Activated B cell treated with CpG ODN at 0.5 μM for 24 hours (primary cell): ENCODE measurements at regions of chr9 and their contacts with region 1.

Region 1: GRCh38 chr9:125558453-125559092 is 148.4 kb downstream of the MAPKAP1 start:
- DNase-seq: no peak
- ATAC-seq: peak; percentile 83
- H3K4me3 Mint-ChIP-seq: no peak overlapping the region
- H3K27ac Mint-ChIP-seq: no peak overlapping the region
- H3K4me1 Mint-ChIP-seq: peaks cover 26% of the 10 kb centered on the region
- H3K27me3 Mint-ChIP-seq: no peaks in the 10 kb centered on the region
- CTCF ChIP-seq: no peak

Region 2: GRCh38 chr9:125200210-125201047 is 358.1 kb before region 1 on chr9 and contains the start of gene RABEPK:
- CTCF ChIA-PET with region 1: no interaction called
- POLR2A ChIA-PET with region 1: no interaction called
- intact Hi-C with region 1: no loop called
- DNase-seq: peak; percentile 95
- ATAC-seq: peak; percentile 98
- H3K4me3 Mint-ChIP-seq: peak within 1 kb of the TSS; percentile 94
- H3K27ac Mint-ChIP-seq: peak within 1 kb of the TSS; percentile 92
- H3K4me1 Mint-ChIP-seq: peaks cover 13% of the 10 kb centered on the region
- H3K27me3 Mint-ChIP-seq: no peaks in the 10 kb centered on the region
- CTCF ChIP-seq: no peak
- total RNA-seq, gene RABEPK: 19.1 and 19.4 TPM in 2 replicates

Region 3: DNA sequence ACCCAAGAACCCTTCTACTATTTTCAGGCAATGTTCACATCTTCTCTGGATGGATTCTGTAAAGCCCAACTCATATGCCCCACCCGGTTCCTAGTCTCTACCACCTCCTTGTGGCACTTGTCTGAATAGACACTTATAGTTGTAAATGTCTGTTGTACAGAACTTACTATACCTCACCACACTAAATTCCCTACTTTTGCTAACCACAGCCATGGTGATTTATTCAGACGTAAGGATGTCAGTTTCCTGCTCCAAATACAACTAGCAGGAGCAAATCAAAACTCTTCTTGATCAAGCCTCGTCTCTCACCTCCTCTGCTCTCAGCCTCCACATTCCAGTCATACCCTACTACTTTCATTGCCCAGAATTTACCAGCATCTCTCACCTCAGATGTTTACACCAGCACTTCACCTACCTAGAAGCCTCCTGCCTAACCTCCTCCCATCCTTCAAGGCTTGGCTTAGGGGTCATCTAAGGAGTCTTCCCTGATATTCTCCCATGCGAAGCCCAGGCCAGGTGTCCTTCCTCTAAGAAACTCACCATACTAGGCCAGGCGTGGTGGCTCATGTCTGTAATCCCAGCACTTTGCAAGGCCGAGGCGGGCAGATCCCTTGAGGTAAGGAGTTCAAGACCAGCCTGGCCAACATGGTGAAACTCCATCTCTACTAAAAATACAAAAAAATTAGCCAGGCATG is 73.0 kb after region 1 on chr9:
- CTCF ChIA-PET with region 1: interaction called, 4 read pairs
- POLR2A ChIA-PET with region 1: no interaction called
- intact Hi-C with region 1: loop called (anchors 2 kb)
- DNase-seq: no peak
- ATAC-seq: no peak
- H3K4me3 Mint-ChIP-seq: peak overlapping the region; percentile 59
- H3K27ac Mint-ChIP-seq: peak overlapping the region; percentile 90
- H3K4me1 Mint-ChIP-seq: peaks cover 84% of the 10 kb centered on the region
- H3K27me3 Mint-ChIP-seq: no peaks in the 10 kb centered on the region
- CTCF ChIP-seq: no peak

Region 4: DNA sequence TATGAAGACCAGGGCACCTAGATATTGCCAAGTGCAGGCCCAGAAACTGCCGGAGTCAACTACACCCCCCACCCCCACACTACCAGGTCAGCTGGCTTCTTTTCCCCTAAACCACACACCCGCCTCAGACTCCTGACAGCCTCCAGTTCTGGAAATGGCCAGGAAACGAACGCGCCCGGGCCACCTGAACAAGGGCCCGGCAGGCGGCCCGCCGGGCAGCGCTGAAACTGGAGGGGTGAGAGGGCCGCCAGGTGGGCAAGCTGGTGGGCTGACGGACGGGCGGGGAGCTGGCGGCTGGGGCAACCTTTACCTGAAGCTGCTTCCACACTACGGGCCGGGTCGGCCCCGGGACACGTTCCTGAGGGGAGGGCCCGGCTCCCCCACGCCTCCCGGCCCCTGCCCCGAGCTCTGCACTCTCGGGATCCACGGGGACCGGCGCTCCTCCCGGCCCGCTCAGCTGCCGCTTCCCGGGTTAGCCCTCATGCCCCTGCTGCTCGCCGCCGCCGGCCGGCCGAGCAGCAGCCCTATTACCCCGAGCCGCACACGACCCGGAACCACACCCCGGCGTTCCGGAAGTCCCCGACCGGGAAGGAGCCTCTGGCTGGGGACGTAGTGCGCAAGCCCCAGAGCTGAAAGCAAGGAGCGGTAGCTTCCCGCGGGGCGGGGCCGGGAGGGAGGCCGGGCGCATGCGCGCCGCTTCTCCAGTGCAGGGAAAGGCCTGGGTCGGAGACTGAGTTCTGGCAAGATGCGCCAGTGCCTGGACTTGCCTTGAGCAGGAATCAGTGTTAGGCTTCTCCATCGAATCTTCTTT is 148.3 kb after region 1 on chr9 and contains the start of gene MAPKAP1:
- CTCF ChIA-PET with region 1: interaction called, 5 read pairs
- POLR2A ChIA-PET with region 1: interaction called, 3 read pairs
- intact Hi-C with region 1: loop called (anchors 2 kb)
- DNase-seq: peak; percentile 86
- ATAC-seq: peak; percentile 99
- H3K4me3 Mint-ChIP-seq: peak within 1 kb of the TSS; percentile 85
- H3K27ac Mint-ChIP-seq: peak within 1 kb of the TSS; percentile 85
- H3K4me1 Mint-ChIP-seq: peaks cover 44% of the 10 kb centered on the region
- H3K27me3 Mint-ChIP-seq: peaks cover 4% of the 10 kb centered on the region
- CTCF ChIP-seq: no peak
- total RNA-seq, gene MAPKAP1: 80.2 and 84.9 TPM in 2 replicates

Region 5: DNA sequence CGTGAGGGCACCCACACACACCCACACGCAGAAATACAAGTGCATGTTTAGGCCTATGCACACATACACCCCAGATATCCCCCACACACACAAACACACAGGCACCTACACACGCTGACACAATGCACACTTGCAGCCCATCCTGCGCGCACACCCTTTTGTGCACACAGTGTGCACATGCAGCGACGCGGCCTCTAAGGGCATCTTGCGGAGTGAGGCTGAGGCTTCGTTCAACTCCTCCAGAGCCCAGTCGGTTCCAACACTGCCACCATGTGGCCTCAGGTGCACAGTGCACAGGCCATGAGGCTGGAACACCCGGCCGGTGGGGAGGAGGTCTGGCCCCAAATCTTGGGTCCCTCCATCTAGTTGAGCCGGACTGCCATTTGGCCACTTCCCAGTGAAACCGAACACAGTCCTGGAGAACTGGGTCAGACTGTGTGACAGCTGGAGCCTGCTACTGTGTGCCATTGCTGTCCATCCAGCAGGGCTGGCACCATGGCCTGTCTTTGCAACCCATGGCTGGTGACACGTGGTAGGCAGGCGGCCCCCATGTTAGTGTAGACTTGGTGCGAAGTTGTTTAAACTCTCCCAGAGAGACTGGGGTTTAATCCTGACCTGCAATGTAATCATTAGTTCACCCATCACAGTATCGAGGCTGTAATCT is 670.3 kb after region 1 on chr9:
- CTCF ChIA-PET with region 1: interaction called, 3 read pairs
- POLR2A ChIA-PET with region 1: no interaction called
- intact Hi-C with region 1: loop called (anchors 1 kb)
- DNase-seq: peak; percentile 62
- ATAC-seq: peak; percentile 99
- H3K4me3 Mint-ChIP-seq: no peak overlapping the region
- H3K27ac Mint-ChIP-seq: no peak overlapping the region
- H3K4me1 Mint-ChIP-seq: peaks cover 1% of the 10 kb centered on the region
- H3K27me3 Mint-ChIP-seq: peaks cover 35% of the 10 kb centered on the region
- CTCF ChIP-seq: no peak

Region 6: DNA sequence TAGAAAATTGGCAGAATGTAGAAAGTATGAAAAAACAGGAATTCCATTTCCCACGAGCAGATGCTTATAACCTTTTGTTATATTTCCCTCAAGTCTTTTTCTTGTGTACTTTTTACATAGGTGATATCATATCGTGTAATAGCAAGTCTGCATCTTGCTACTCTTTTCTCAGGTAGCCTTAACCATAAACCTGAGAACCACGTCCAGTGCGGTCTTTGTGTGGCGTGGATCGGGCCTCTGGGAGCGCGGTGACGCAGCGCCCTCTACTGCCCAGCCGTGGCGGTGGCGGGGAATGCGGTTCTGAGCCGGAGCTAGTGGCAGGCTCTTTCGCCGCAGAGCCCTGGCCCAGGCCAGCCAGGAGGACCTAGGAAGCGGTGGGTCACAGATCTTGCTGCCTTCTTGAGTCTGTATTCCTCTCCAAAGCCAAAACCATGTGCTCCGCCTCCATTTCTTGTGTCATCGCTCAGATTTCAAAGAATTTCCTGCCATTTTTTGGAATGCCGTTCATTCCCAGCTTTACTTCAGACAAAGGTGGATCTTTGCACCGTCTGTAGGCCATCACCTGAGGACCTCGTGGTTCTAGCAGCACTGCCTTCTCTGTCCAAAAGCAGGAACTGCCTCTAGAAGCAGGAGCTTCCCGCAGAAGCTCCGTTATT is 840.0 kb after region 1 on chr9:
- CTCF ChIA-PET with region 1: interaction called, 5 read pairs
- POLR2A ChIA-PET with region 1: no interaction called
- intact Hi-C with region 1: loop called (anchors 5 kb)
- DNase-seq: peak; percentile 75
- ATAC-seq: peak; percentile 33
- H3K4me3 Mint-ChIP-seq: no peak overlapping the region
- H3K27ac Mint-ChIP-seq: peak overlapping the region; percentile 7
- H3K4me1 Mint-ChIP-seq: peaks cover 28% of the 10 kb centered on the region
- H3K27me3 Mint-ChIP-seq: peaks cover 5% of the 10 kb centered on the region
- CTCF ChIP-seq: peak; percentile 66